H1 (cell line): ENCODE measurements at regions of chr20 and their contacts with region 1.

Region 1: GRCh38 chr20:62964700-62965099 is 12.2 kb downstream of the SLC17A9 start:
- DNase-seq: no peak
- H3K4me3 ChIP-seq: no peak overlapping the region
- H3K27ac ChIP-seq: no peak overlapping the region
- H3K4me1 ChIP-seq: peaks cover 0 to 3% (median 0%) of the 10 kb centered on the region in 4 experiments; a peak in 2 of 7 replicates
- H3K27me3 ChIP-seq: no peaks in the 10 kb centered on the region
- CTCF ChIP-seq: no peak
- EP300 ChIP-seq: no peak
- POLR2A ChIP-seq: no peak
- RAD21 ChIP-seq: no peak

Region 2: DNA sequence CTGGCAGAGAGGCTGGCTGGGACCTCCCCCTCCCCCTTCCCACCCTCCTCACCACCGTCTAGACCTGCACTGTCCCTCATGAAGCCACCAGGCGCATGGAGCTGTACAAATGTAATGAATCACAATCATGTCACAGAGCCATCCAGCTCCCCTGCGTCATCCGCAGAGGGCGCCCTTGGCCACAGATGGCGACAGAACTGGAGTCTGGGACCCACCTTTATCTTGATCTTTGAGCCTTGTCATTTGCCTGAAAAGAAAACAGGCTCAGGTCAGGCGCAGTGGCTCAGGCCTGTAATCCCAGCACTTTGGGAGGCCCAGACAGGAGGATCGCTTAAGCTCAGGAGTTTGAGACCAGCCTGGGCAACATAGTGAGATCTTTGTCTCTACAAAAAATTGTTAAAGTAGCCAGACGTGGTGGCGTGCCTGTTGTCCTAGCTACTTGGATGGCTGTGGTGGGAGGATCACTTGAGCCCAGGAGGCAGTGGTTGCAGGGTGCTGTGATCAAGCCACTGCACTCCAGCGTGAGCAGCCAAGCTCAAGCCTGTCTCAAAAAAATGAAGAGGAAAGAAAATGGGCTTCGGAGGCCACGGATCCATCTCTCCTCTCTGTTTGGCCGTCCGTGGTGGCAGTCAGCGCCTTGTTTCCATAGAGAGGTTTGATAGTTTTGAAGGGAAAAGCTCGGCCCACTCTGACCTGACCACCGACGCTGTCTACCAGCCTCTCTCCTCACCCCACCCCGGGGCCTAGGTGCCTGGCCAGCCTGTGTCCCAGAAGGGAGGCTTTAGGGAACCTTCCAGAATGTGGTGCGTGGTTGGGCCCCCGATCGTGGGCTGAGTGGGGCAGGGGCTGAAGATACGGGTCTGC is 141.7 kb before region 1 on chr20:
- CTCF ChIA-PET with region 1: no interaction called
- POLR2A ChIA-PET with region 1: no interaction called
- DNase-seq: peak in 1 of 2 experiments; percentile 57
- H3K4me3 ChIP-seq: no peak overlapping the region
- H3K27ac ChIP-seq: no peak overlapping the region
- H3K4me1 ChIP-seq: peaks cover 0 to 19% (median 10%) of the 10 kb centered on the region in 4 experiments; a peak in 5 of 7 replicates
- H3K27me3 ChIP-seq: no peaks in the 10 kb centered on the region
- CTCF ChIP-seq: peak; percentile 66 to 70 (median 69)
- EP300 ChIP-seq: no peak
- POLR2A ChIP-seq: no peak
- RAD21 ChIP-seq: peak; percentile 67 to 75

Region 3: GRCh38 chr20:63009045-63009961 is 44.6 kb after region 1 on chr20:
- CTCF ChIA-PET with region 1: interaction called, 53 read pairs
- POLR2A ChIA-PET with region 1: interaction called, 8 read pairs
- DNase-seq: peak in 1 of 2 experiments; percentile 96
- H3K4me3 ChIP-seq: peak overlapping the region in 1 of 4 experiments; percentile 58; a peak in 2 of 8 replicates
- H3K27ac ChIP-seq: no peak overlapping the region
- H3K4me1 ChIP-seq: peaks cover 0 to 30% (median 16%) of the 10 kb centered on the region in 4 experiments; a peak in 6 of 7 replicates
- H3K27me3 ChIP-seq: peaks cover 50 to 74% (median 60%) of the 10 kb centered on the region in 4 experiments
- CTCF ChIP-seq: peak; percentile 83 to 96 (median 87)
- EP300 ChIP-seq: 0 out of 3 replicates have a peak, but pooled peaks of 1 of the 2 experiments have one; percentile 16
- POLR2A ChIP-seq: no peak
- RAD21 ChIP-seq: peak; percentile 93 to 97